Posterior cingulate gyrus (tissue), 11 donors: ENCODE measurements at regions of chr20 and their contacts with region 1.

Region 1: DNA sequence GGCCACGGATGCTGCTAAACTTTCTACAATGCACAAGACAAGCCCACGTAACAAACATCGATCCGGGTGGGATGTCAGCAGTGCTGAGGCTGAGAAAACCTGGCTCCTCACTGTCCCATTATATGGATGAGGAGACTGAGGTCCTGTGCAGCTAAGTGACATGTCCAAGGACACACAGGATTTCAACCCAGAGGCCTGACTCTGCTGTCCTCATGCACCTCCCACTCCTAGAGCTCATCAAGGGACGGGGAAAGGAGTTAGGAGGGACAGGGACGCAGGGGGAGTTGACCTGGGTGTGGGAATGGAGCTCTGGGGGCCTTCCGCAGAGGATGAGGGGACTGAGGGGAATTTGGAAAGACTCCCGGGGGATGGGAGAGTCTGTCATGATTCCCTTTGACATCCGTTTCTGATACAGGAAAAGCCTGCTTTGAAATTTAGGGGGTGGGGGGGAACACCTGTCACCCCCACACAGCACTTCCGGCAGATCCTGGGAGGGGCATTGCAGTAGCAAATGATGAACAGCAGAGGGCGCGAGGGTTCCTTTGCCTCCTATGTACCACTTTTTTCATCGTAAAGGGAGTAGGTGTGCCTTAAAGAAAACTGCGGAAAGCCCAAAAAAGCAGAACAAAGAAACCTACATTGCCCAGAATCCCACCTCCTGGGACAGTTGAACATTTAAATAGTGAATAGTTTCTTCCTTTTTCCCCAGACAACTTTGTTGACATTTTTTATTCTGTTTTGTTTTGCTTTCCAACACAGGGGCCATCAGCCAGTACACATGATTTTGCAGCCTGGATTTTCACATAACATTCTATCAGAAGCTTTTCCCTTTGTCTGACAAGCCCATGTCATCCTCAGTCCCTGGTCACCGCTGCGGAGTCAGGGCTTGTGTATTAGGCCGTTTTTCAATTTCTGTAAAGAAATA is 48.6 kb downstream of the SLC2A10 start:
- DNase-seq: peak in 7 of 10 donors; percentile 36 to 91 (median 46)

Region 2: DNA sequence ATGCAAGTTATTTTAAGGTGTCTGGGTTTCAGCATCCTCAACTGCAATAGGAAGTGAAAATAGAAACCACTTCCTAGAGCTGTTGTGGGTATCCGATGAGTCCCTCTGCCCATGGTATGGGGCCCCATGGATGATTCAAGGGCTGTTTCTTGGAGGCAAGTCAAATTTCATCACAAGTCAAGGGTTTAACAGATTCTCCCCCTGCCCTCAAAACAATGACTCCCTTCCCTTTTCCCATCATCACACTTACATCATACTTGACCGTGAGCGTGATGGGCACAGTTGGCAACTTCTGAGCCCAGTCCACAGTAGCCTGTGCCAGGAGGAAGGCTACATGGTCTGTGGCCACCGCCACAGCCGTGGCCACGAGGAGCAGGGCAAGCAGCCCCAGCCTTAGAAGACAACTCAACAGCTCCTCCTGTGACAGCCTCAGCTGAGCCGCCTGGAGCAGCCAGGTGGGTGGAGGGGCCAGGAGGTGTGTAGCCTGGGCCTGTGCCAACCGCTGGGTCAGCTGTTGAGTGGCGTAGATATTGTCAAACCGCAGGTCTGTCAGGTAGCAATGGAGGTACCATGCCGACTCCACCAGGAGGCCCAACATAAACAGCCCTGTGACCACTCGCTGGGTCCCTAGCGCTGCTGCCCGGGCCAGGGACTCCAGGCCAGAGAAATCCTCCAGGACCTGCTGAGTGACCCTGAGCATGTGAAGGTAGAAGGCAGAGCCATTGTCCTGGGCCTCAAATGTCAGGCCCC is 212.8 kb before region 1 on chr20:
- intact Hi-C with region 1: no loop called
- DNase-seq: peak in 1 of 10 donors; percentile 86

Region 3: GRCh38 chr20:47150403-47151152 is 392.6 kb after region 1 on chr20:
- intact Hi-C with region 1: loop called (anchors 10 kb)
- DNase-seq: peak in 5 of 10 donors; percentile 11 to 86 (median 20)